Right ventricle myocardium superior (tissue), 1 donor: ENCODE measurements at regions of chr9 and their contacts with region 1.

Region 1: GRCh38 chr9:83649080-83649479 is 26.1 kb downstream of the IDNK start:
- DNase-seq: peak; percentile 77
- ATAC-seq: peak; percentile 85

Region 2: DNA sequence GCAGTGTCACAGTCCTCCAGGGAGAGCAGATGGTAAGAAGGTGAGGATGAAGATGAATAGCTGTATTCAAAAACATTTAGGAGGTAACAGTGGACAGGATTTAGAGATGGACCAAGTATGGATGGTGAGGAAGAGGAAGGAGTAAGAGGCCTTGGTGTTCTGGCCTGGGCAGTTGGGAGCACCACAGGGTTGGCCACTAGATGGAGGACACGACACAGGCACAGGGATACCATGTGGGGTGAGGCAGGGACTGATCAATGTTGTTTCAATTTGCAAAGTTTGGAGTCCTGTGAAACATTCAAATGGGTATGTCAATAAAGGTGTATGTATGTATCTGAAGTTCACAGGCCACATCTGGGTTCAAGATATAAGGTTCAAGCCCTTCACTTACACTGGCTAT is 445.0 kb before region 1 on chr9:
- intact Hi-C with region 1: loop called (anchors 10 kb)
- DNase-seq: no peak
- ATAC-seq: no peak